Activated CD4-positive, alpha-beta T cell treated with anti-CD3 and anti-CD28 coated beads, Interleukin-2, amount 10 ng/mL, durations not matched to agents 24 days and 14 days (primary cell): ENCODE measurements at regions of chr19 and their contacts with region 1.

Region 1: DNA sequence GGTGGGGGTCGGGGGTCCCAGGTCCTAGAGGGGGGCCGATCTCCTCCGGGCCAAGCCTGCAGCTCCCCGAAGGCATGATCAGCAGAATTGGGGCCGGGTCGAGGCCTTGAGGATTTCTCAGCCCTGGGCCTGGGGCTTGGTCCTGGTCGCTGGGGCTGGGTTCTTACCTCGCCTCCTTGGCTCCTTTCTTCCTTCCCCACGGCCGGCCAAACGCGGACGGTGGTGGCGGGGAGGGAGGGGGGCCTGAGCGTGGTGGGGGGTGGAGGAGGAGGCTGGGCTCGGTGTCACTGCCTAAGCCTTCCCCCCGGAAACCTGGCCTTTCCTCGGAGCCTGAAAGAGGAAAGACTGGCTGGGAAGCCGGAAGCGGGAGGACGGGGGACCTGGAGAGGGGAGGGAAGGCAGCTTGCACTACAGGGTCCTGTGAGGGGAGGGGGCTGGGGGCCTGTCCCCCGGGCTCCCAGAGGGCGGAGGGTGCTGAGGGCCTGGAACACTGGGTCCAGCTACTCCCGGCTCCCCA is at the start of gene ZNF579:
- DNase-seq: peak; percentile 94
- H3K4me3 Mint-ChIP-seq: peak within 1 kb of the TSS; percentile 87
- H3K27ac Mint-ChIP-seq: peak within 1 kb of the TSS; percentile 83
- H3K4me1 Mint-ChIP-seq: peaks cover 18% of the 10 kb centered on the region
- H3K27me3 Mint-ChIP-seq: peaks cover 12% of the 10 kb centered on the region
- total RNA-seq, gene ZNF579: 9.6 and 10.4 TPM in 2 replicates

Region 2: DNA sequence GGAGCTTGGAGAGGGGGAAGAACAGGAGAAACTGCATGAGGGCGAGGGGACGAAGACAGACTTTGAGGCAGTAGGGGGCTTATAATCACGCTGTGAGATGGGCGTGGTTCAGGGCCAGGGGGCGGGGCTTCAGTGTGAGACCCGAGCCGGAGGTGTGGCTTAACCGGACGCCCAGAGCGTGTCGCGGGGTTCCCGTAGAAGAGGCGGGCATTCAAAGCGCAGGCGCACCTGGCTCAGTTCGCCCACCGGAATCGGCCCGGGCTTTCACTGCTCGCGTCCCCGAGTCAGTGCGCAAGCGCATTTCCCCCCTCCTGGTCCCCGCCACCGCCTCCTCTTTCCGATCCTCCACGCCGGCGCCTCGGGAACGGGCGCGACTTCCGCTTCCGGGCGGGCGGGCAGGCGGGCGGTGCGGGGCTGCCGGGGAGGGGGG is 24.5 kb after region 1 on chr19:
- intact Hi-C with region 1: no loop called
- DNase-seq: peak; percentile 100
- H3K4me3 Mint-ChIP-seq: peak overlapping the region; percentile 85
- H3K27ac Mint-ChIP-seq: peak overlapping the region; percentile 93
- H3K4me1 Mint-ChIP-seq: peaks cover 46% of the 10 kb centered on the region
- H3K27me3 Mint-ChIP-seq: peaks cover 3% of the 10 kb centered on the region

Region 3: DNA sequence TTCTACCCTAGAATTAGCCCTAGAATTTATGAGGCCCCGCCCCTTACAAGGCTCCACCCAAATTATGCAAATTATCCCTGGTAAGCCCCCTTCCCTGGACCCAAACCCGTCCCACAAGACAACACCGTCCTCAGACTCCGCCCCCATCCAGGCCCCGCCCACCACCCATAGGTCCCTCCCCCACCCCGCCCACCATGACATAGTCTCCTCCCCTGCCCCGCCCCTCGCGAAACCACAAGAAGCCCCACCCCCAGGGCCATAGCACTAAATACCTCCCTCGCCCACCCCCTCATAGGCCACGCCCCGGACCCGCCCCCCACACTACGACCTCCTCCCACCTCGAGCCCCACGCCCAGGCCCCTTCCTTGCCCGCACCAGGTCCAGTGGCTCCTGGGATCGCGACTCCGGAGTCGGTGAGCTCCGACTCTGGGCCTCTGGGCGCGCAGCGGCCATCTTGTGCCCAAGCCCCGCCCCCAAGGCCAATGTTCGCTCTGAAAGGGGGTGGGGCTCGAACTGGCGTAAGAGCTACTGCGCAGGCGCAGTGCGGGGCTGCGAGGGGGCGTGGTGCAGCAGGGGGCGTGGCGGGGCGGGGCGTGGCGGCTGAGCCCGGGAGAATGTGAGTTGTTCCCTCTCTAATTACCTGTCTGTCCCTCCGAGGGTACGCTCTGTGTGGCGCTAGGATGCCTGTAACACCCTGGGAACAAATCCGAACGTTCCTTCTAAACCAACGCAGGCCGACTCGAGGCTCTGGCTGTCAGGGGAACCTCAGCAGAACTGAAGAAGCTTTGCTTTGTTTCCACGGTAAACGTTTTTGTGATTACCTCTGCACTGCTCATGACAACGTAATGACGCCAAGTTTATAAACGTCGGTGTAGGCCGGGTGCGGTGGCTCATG is 43.7 kb after region 1 on chr19 and contains the start of gene ZNF784:
- intact Hi-C with region 1: loop called (anchors 5 kb)
- DNase-seq: peak; percentile 98
- H3K4me3 Mint-ChIP-seq: peak within 1 kb of the TSS; percentile 96
- H3K27ac Mint-ChIP-seq: peak within 1 kb of the TSS; percentile 99
- H3K4me1 Mint-ChIP-seq: peaks cover 43% of the 10 kb centered on the region
- H3K27me3 Mint-ChIP-seq: peaks cover 13% of the 10 kb centered on the region
- total RNA-seq, gene ZNF784: 3.6 and 3.7 TPM in 2 replicates